Posterior cingulate gyrus (tissue), 11 donors: ENCODE measurements at regions of chr20 and their contacts with region 1.

Region 1: GRCh38 chr20:5448449-5449118 is 131.8 kb upstream of the PROKR2 start:
- DNase-seq: peak in 6 of 10 donors; percentile 40 to 74 (median 64)

Region 2: GRCh38 chr20:5126512-5127203 is 321.9 kb before region 1 on chr20 and contains the start of gene CDS2:
- intact Hi-C with region 1: loop called (anchors 10 kb)
- DNase-seq: peak; percentile 100

Region 3: DNA sequence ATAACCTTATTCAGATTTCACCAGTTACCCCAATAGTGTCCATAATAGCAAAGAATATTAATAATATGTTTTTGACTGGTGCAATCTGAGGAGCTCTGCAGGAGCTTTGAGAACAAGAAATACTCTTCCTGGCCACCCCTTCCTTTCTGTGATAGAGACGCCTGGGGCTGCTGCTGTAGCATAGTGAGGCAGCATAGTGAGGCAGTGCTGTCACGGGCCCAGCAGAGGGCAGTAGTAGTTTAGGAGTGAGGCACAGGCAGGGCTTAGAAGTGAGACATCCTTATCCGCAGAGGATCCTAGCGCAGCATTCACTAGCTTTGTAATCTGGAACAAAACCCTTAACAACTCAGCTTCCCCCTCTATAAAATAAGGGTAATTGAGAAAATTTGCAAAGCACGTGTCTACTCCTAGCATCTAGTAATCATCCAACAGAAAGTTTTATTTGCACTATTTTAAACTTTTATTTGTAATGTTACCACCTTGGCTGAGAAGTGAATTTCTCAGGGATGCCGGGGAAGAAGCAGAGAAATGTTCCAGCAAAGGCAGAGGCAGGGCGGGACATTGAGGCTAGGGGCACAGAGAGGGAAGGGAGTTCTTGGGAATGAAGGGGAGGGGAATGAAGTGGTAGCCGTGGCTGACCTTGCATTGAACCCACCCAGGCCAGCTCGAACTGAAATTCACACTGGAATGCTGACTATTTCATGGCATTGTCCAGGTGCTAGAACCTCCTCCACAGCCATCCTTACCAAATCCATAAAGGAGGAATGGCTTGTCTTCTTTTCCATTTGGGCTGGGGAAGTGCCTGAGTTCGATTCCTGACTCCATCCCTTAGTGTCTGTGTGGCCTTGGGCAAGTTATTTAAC is 243.0 kb before region 1 on chr20:
- intact Hi-C with region 1: loop called (anchors 1 kb)
- DNase-seq: peak; percentile 68 to 97 (median 86)